Activated T-helper 1 cell treated with anti-CD3 and anti-CD28 coated beads, Interleukin-12 subunit alpha, Interleukin-12 subunit beta, Interleukin-2, Interleukin-4 antibody, amounts not matched to agents 30 ng/mL and 10 ng/mL and 1 ng/mL, durations not matched to agents 14 hours and 24 hours and 36 hours (primary cell): ENCODE measurements at regions of chr9 and their contacts with region 1.

Region 1: GRCh38 chr9:136400038-136400834 is at the start of gene SNAPC4:
- DNase-seq: peak; percentile 86
- H3K4me3 Mint-ChIP-seq: peak within 1 kb of the TSS; percentile 91
- H3K27ac Mint-ChIP-seq: peak within 1 kb of the TSS; percentile 76
- H3K4me1 Mint-ChIP-seq: peaks cover 40% of the 10 kb centered on the region
- H3K27me3 Mint-ChIP-seq: no peaks in the 10 kb centered on the region
- total RNA-seq, gene SNAPC4: 26.7 TPM in 2 replicates

Region 2: DNA sequence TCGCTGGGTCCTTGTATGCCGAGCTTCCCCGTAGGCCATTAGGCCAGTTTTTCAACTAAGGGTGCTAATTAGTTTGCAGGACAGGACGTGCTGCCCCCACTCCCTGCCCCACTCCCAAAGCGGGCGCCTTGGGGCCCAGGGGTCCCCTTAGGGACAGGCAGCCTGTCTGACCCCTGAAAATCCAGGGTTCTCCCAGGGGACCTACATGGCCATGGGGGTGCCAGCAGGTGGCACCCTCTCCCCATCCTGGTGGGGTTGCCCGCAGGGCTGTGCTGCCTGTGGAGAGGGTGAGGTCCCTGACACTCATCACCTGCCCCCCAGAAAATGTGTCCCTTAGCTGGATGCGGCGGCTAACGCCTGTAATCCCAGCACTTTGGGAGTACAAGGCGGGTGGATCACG is 87.8 kb before region 1 on chr9:
- intact Hi-C with region 1: loop called (anchors 1 kb)
- DNase-seq: no peak
- H3K4me3 Mint-ChIP-seq: no peak overlapping the region
- H3K27ac Mint-ChIP-seq: no peak overlapping the region
- H3K4me1 Mint-ChIP-seq: no peaks in the 10 kb centered on the region
- H3K27me3 Mint-ChIP-seq: peaks cover 4% of the 10 kb centered on the region

Region 3: GRCh38 chr9:136385015-136385414 is 15.2 kb before region 1 on chr9:
- intact Hi-C with region 1: loop called (anchors 1 kb)
- DNase-seq: peak; percentile 46
- H3K4me3 Mint-ChIP-seq: no peak overlapping the region
- H3K27ac Mint-ChIP-seq: peak overlapping the region; percentile 67
- H3K4me1 Mint-ChIP-seq: peaks cover 18% of the 10 kb centered on the region
- H3K27me3 Mint-ChIP-seq: no peaks in the 10 kb centered on the region

Region 4: DNA sequence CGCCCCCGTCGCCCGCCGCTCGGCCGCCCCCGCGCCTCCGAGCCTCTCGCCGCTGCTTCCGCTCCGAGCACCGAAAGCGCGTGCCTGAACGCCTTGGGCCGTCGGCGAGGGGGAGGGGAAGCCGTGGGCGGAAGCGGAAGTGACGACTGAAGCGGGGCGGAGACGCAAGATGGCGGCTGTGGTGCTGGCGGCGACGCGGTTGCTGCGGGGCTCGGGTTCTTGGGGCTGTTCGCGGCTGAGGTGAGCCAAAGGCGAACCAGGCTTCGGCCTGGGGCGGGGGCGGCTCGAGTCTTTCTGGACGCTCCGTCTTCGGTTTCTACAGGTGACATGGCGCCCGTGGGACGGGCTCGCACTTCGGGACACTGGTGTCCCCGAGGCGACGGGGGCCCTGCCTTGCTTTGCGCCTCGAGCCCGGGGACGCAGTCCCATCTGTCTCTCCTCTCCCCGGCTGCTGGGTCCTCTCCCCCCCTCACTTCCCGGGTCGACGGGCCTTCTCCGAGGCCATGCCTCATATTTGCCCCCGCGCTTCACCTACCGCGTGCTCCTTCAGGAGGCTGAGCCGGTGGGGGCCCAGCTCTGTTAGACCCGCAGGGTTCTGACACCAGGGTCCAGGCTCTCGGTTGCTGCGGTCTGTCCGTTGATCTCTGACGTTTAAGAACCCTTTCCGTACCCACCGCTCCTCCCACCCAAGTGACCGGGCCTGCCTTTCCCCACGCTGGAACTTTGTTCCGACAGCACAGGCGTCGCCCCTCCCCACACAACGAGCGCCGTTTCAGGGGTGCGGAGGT is 10.5 kb after region 1 on chr9 and contains the starts of genes ENTR1 and PMPCA:
- intact Hi-C with region 1: loop called (anchors 1 kb)
- DNase-seq: peak; percentile 93
- H3K4me3 Mint-ChIP-seq: peak within 1 kb of the TSS; percentile 97
- H3K27ac Mint-ChIP-seq: peak within 1 kb of the TSS; percentile 94
- H3K4me1 Mint-ChIP-seq: peaks cover 35% of the 10 kb centered on the region
- H3K27me3 Mint-ChIP-seq: peaks cover 3% of the 10 kb centered on the region
- total RNA-seq, gene ENTR1: 50.0 and 54.5 TPM in 2 replicates
- total RNA-seq, gene PMPCA: 104 and 114 TPM in 2 replicates